H1 (cell line): ENCODE measurements at regions of chrX and their contacts with region 1.

Region 1: GRCh38 chrX:24054182-24055042 is at the start of gene EIF2S3:
- DNase-seq: peak; percentile 61 to 84
- H3K4me3 ChIP-seq: peak within 1 kb of the TSS in 3 of 4 experiments; percentile 9 to 87 (median 85); a peak in 5 of 8 replicates
- H3K27ac ChIP-seq: peak within 1 kb of the TSS; percentile 99
- H3K4me1 ChIP-seq: peaks cover 0 to 2% (median 0%) of the 10 kb centered on the region in 4 experiments; a peak in 1 of 7 replicates
- H3K27me3 ChIP-seq: no peaks in the 10 kb centered on the region
- CTCF ChIP-seq: peak; percentile 42 to 52 (median 44)
- EP300 ChIP-seq: no peak
- POLR2A ChIP-seq: peak; percentile 16 to 89
- RAD21 ChIP-seq: peak; percentile 40 to 55; a peak in 3 of 4 replicates
- total RNA-seq, gene EIF2S3: 244 and 259 TPM in 2 replicates

Region 2: GRCh38 chrX:23907498-23908218 is 146.8 kb before region 1 on chrX and contains the starts of genes APOO and CXorf58:
- CTCF ChIA-PET with region 1: interaction called, 19 read pairs
- POLR2A ChIA-PET with region 1: interaction called, 16 read pairs
- DNase-seq: peak; percentile 84 to 87
- H3K4me3 ChIP-seq: peak within 1 kb of the TSS; percentile 58 to 90 (median 64)
- H3K27ac ChIP-seq: peak within 1 kb of the TSS; percentile 45; the same call in 1 of the 2 replicates
- H3K4me1 ChIP-seq: peaks cover 0 to 4% (median 0%) of the 10 kb centered on the region in 4 experiments; a peak in 1 of 7 replicates
- H3K27me3 ChIP-seq: no peaks in the 10 kb centered on the region
- CTCF ChIP-seq: peak; percentile 62 to 99 (median 64)
- EP300 ChIP-seq: peak in 1 of 2 experiments; percentile 33; a peak in 1 of 3 replicates
- POLR2A ChIP-seq: no peak
- RAD21 ChIP-seq: peak; percentile 35 to 57; a peak in 3 of 4 replicates
- total RNA-seq, gene APOO: 45.0 and 48.9 TPM in 2 replicates
- total RNA-seq, gene CXorf58: not detected in 2 replicates

Region 3: GRCh38 chrX:24024819-24025740 is 29.3 kb before region 1 on chrX:
- CTCF ChIA-PET with region 1: interaction called, 23 read pairs
- POLR2A ChIA-PET with region 1: interaction called, 37 read pairs
- DNase-seq: peak; percentile 27 to 70
- H3K4me3 ChIP-seq: peak overlapping the region; percentile 65 to 97 (median 77)
- H3K27ac ChIP-seq: no peak overlapping the region; the same call in 1 of the 2 replicates
- H3K4me1 ChIP-seq: peaks cover 0 to 7% (median 0%) of the 10 kb centered on the region in 4 experiments; a peak in 1 of 7 replicates
- H3K27me3 ChIP-seq: peaks cover 0 to 2% (median 0%) of the 10 kb centered on the region in 4 experiments; a peak in 2 of 7 replicates
- CTCF ChIP-seq: peak in 1 of 3 experiments; percentile 4; a peak in 1 of 4 replicates
- EP300 ChIP-seq: no peak
- POLR2A ChIP-seq: peak; percentile 48 to 53
- RAD21 ChIP-seq: no peak

Region 4: DNA sequence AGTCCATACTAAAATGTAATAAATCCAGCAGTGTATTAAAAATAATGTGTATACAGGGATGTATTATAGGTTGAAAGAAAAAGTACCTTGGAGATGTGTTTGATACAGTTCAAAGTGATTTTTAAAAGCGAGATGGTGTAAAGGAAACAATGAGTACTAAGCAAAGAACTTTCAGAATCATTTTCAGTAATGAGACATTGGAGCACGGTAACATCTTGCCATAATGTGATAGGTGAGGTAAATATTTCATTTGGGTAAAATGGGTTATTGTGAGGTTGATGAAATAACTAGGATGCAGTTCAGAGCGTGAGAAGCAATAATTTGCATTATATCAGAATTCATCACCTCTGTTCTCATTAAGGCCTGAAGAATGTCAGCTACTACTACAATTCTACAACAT is 26.3 kb after region 1 on chrX:
- CTCF ChIA-PET with region 1: no interaction called
- POLR2A ChIA-PET with region 1: interaction called, 160 read pairs
- DNase-seq: no peak
- H3K4me3 ChIP-seq: no peak overlapping the region
- H3K27ac ChIP-seq: no peak overlapping the region
- H3K4me1 ChIP-seq: no peaks in the 10 kb centered on the region
- H3K27me3 ChIP-seq: no peaks in the 10 kb centered on the region
- CTCF ChIP-seq: no peak
- EP300 ChIP-seq: no peak
- POLR2A ChIP-seq: no peak
- RAD21 ChIP-seq: no peak